ENCODE measurements at regions of chr19 and their contacts with region 1.

Region 1: GRCh38 chr19:10388957-10389356 is 8.6 kb upstream of the TYK2 start:
- H3K4me3 Mint-ChIP-seq: no peak overlapping the region
- H3K27ac Mint-ChIP-seq: no peak overlapping the region
- H3K4me1 Mint-ChIP-seq: peaks cover 12% of the 10 kb centered on the region
- H3K27me3 Mint-ChIP-seq: no peaks in the 10 kb centered on the region

Region 2: GRCh38 chr19:10259162-10259905 is 129.6 kb before region 1 on chr19:
- intact Hi-C with region 1: loop called (anchors 2 kb)
- H3K4me3 Mint-ChIP-seq: no peak overlapping the region
- H3K27ac Mint-ChIP-seq: no peak overlapping the region
- H3K4me1 Mint-ChIP-seq: peaks cover 50% of the 10 kb centered on the region
- H3K27me3 Mint-ChIP-seq: peaks cover 1% of the 10 kb centered on the region

Region 3: GRCh38 chr19:10269333-10270179 is 119.4 kb before region 1 on chr19:
- intact Hi-C with region 1: loop called (anchors 1 kb)
- H3K4me3 Mint-ChIP-seq: peak overlapping the region; percentile 94
- H3K27ac Mint-ChIP-seq: peak overlapping the region; percentile 98
- H3K4me1 Mint-ChIP-seq: peaks cover 56% of the 10 kb centered on the region
- H3K27me3 Mint-ChIP-seq: no peaks in the 10 kb centered on the region

Region 4: DNA sequence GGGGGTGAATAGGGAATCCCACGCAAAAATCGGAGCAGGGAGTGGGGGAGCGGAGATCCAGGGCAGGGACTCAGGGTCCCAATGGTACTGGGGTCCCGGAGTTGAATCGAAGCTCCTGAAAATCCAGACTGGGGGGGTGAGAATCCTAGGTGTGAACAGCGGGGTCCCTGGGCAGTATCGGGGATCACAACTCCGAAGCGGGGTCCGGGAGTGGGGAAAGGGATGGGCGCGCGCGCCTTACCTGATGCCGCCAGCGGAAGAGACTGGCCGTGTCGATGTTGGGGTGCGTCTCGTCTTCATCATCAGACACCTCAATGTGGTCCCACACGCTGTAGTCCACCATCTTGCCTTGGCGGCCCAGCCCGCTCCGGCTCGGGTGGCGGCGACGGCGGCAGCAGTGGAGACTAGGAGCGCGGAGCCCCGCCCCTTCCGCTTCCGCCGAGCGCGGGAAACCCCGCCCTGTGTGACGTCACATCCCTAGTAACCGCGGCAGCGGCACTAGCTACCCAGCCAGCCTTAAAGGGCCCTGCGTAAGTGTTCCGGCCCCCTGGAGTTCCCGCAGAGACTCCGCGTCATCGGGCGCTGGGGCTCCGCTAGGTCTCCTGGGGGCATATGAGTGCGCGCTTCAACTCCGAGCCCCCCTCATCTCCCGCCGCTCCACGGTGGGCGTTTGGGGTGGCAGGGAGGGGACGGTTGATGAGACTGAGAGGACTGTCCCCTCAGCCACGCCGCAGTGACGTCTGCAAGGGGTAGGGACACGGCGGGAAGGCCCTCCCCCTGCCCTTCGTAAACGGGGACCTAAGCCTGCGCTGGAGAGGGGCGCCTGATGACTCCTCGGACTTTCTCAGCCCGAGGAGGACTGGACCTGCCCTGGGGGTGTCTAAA is 14.4 kb after region 1 on chr19 and contains the start of gene CDC37:
- intact Hi-C with region 1: no loop called
- H3K4me3 Mint-ChIP-seq: peak within 1 kb of the TSS; percentile 96
- H3K27ac Mint-ChIP-seq: peak within 1 kb of the TSS; percentile 93
- H3K4me1 Mint-ChIP-seq: peaks cover 78% of the 10 kb centered on the region
- H3K27me3 Mint-ChIP-seq: no peaks in the 10 kb centered on the region